Naive thymus-derived CD4-positive, alpha-beta T cell (primary cell): ENCODE measurements at regions of chr16 and their contacts with region 1.

Region 1: GRCh38 chr16:57447186-57447962 is at the starts of genes CIAPIN1 and COQ9:
- DNase-seq: peak; percentile 83 to 94 (median 88)
- ATAC-seq: peak; percentile 99
- H3K4me3 ChIP-seq: peak within 1 kb of the TSS; percentile 84
- H3K4me3 Mint-ChIP-seq: peak within 1 kb of the TSS; percentile 90 to 97 (median 92)
- H3K27ac ChIP-seq: peak within 1 kb of the TSS; percentile 87
- H3K27ac Mint-ChIP-seq: peak within 1 kb of the TSS; percentile 75 to 96 (median 90)
- H3K4me1 ChIP-seq: peaks cover 7 to 17% of the 10 kb centered on the region in 2 donors
- H3K4me1 Mint-ChIP-seq: peaks cover 15 to 64% (median 45%) of the 10 kb centered on the region in 7 donors
- H3K27me3 ChIP-seq: no peaks in the 10 kb centered on the region
- H3K27me3 Mint-ChIP-seq: no peaks in the 10 kb centered on the region
- total RNA-seq, gene CIAPIN1: 33.6 to 52.8 (median 35.8) TPM
- total RNA-seq, gene COQ9: 16.4 to 45.4 (median 36.6) TPM

Region 2: GRCh38 chr16:57416122-57416509 is 31.3 kb before region 1 on chr16:
- CTCF ChIA-PET with region 1: interaction called, 22 read pairs
- POLR2A ChIA-PET with region 1: interaction called, 7 read pairs
- intact Hi-C with region 1: loop called (anchors 1 to 2 kb)
- DNase-seq: no peak
- ATAC-seq: no peak
- H3K4me3 ChIP-seq: no peak overlapping the region
- H3K4me3 Mint-ChIP-seq: no peak overlapping the region
- H3K27ac ChIP-seq: no peak overlapping the region
- H3K27ac Mint-ChIP-seq: no peak overlapping the region
- H3K4me1 ChIP-seq: peaks cover 11 to 18% of the 10 kb centered on the region in 2 donors
- H3K4me1 Mint-ChIP-seq: peaks cover 17 to 29% (median 23%) of the 10 kb centered on the region in 7 donors
- H3K27me3 ChIP-seq: no peaks in the 10 kb centered on the region
- H3K27me3 Mint-ChIP-seq: no peaks in the 10 kb centered on the region

Region 3: GRCh38 chr16:57422026-57422944 is 25.1 kb before region 1 on chr16:
- CTCF ChIA-PET with region 1: interaction called, 22 read pairs
- POLR2A ChIA-PET with region 1: interaction called, 7 read pairs
- intact Hi-C with region 1: loop called (anchors 1 to 2 kb)
- DNase-seq: no peak
- ATAC-seq: no peak
- H3K4me3 ChIP-seq: no peak overlapping the region
- H3K4me3 Mint-ChIP-seq: no peak overlapping the region
- H3K27ac ChIP-seq: no peak overlapping the region
- H3K27ac Mint-ChIP-seq: peak overlapping the region in 1 of 9 donors; percentile 48
- H3K4me1 ChIP-seq: peaks cover 9 to 10% of the 10 kb centered on the region in 2 donors
- H3K4me1 Mint-ChIP-seq: peaks cover 11 to 29% (median 24%) of the 10 kb centered on the region in 7 donors
- H3K27me3 ChIP-seq: no peaks in the 10 kb centered on the region
- H3K27me3 Mint-ChIP-seq: no peaks in the 10 kb centered on the region

Region 4: GRCh38 chr16:57432989-57433388 is 14.4 kb before region 1 on chr16:
- CTCF ChIA-PET with region 1: interaction called, 4 read pairs
- POLR2A ChIA-PET with region 1: interaction called, 15 read pairs
- intact Hi-C with region 1: loop called in 1 of 2 experiments (anchors 1 kb)
- DNase-seq: peak in 2 of 9 donors; percentile 16 to 17
- ATAC-seq: no peak
- H3K4me3 ChIP-seq: no peak overlapping the region
- H3K4me3 Mint-ChIP-seq: peak overlapping the region in 8 of 10 donors; percentile 43 to 79 (median 70)
- H3K27ac ChIP-seq: peak overlapping the region; percentile 49
- H3K27ac Mint-ChIP-seq: peak overlapping the region in 8 of 9 donors; percentile 74 to 93 (median 88)
- H3K4me1 ChIP-seq: peaks cover 0 to 33% of the 10 kb centered on the region in 2 donors
- H3K4me1 Mint-ChIP-seq: peaks cover 0 to 48% (median 38%) of the 10 kb centered on the region in 7 donors
- H3K27me3 ChIP-seq: no peaks in the 10 kb centered on the region
- H3K27me3 Mint-ChIP-seq: no peaks in the 10 kb centered on the region

Region 5: GRCh38 chr16:57462209-57462977 is 15.0 kb after region 1 on chr16 and contains the start of gene POLR2C:
- CTCF ChIA-PET with region 1: interaction called, 7 read pairs
- POLR2A ChIA-PET with region 1: interaction called, 95 read pairs
- intact Hi-C with region 1: loop called (anchors 1 kb)
- DNase-seq: peak; percentile 84 to 96 (median 92)
- ATAC-seq: peak; percentile 99
- H3K4me3 ChIP-seq: peak within 1 kb of the TSS; percentile 86
- H3K4me3 Mint-ChIP-seq: peak within 1 kb of the TSS; percentile 79 to 100 (median 98)
- H3K27ac ChIP-seq: peak within 1 kb of the TSS; percentile 77
- H3K27ac Mint-ChIP-seq: peak within 1 kb of the TSS; percentile 93 to 100 (median 99)
- H3K4me1 ChIP-seq: peaks cover 17 to 23% of the 10 kb centered on the region in 2 donors
- H3K4me1 Mint-ChIP-seq: peaks cover 19 to 45% (median 35%) of the 10 kb centered on the region in 7 donors
- H3K27me3 ChIP-seq: no peaks in the 10 kb centered on the region
- H3K27me3 Mint-ChIP-seq: no peaks in the 10 kb centered on the region
- total RNA-seq, gene POLR2C: 63.4 to 96.3 (median 81.4) TPM

Region 6: GRCh38 chr16:57485916-57486857 is 38.8 kb after region 1 on chr16 and contains the start of gene DOK4:
- CTCF ChIA-PET with region 1: interaction called, 3 read pairs
- POLR2A ChIA-PET with region 1: interaction called, 6 read pairs
- intact Hi-C with region 1: loop called in 1 of 2 experiments (anchors 1 kb)
- DNase-seq: peak; percentile 47 to 87 (median 65)
- ATAC-seq: peak; percentile 97
- H3K4me3 ChIP-seq: peak within 1 kb of the TSS; percentile 59
- H3K4me3 Mint-ChIP-seq: peak within 1 kb of the TSS; percentile 82 to 97 (median 87)
- H3K27ac ChIP-seq: peak within 1 kb of the TSS; percentile 64
- H3K27ac Mint-ChIP-seq: peak within 1 kb of the TSS in 8 of 9 donors; percentile 36 to 86 (median 54)
- H3K4me1 ChIP-seq: peaks cover 9 to 17% of the 10 kb centered on the region in 2 donors
- H3K4me1 Mint-ChIP-seq: peaks cover 11 to 30% (median 19%) of the 10 kb centered on the region in 7 donors
- H3K27me3 ChIP-seq: no peaks in the 10 kb centered on the region
- H3K27me3 Mint-ChIP-seq: peaks cover 0 to 19% (median 0%) of the 10 kb centered on the region in 5 donors
- total RNA-seq, gene DOK4: 2.2 to 4.0 (median 2.9) TPM